Activated CD4-positive, alpha-beta T cell treated with anti-CD3 and anti-CD28 coated beads, Interleukin-2, amount 10 ng/mL, durations not matched to agents 24 days and 14 days (primary cell): ENCODE measurements at regions of chr6 and their contacts with region 1.

Region 1: GRCh38 chr6:89371849-89372505 is 19.5 kb upstream of the UBE2J1 start:
- DNase-seq: peak; percentile 95
- H3K4me3 Mint-ChIP-seq: peak overlapping the region; percentile 48
- H3K27ac Mint-ChIP-seq: peak overlapping the region; percentile 77
- H3K4me1 Mint-ChIP-seq: peaks cover 39% of the 10 kb centered on the region
- H3K27me3 Mint-ChIP-seq: no peaks in the 10 kb centered on the region

Region 2: DNA sequence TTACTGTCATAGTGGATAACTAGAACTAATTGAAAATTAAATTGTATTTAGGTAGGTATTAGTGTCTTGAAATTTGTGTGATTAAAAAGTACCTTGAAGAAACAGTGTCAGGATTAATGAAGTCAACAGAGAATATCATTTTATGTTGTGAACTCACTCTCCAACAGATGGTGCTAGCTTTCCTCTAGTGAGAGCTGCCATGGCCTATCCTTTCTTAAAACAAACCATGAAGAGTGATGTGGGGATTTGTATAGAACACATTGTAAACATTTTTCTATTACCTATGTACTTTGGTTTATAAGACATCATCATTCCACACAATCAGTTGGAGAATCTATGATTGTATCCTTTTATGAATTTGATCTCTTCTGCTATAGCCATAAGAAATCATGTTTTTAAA is 249.4 kb before region 1 on chr6:
- intact Hi-C with region 1: loop called (anchors 2 kb)
- DNase-seq: peak; percentile 67
- H3K4me3 Mint-ChIP-seq: no peak overlapping the region
- H3K27ac Mint-ChIP-seq: no peak overlapping the region
- H3K4me1 Mint-ChIP-seq: no peaks in the 10 kb centered on the region
- H3K27me3 Mint-ChIP-seq: peaks cover 23% of the 10 kb centered on the region

Region 3: GRCh38 chr6:89297695-89298351 is 74.2 kb before region 1 on chr6:
- intact Hi-C with region 1: no loop called
- DNase-seq: peak; percentile 90
- H3K4me3 Mint-ChIP-seq: peak overlapping the region; percentile 56
- H3K27ac Mint-ChIP-seq: peak overlapping the region; percentile 86
- H3K4me1 Mint-ChIP-seq: peaks cover 22% of the 10 kb centered on the region
- H3K27me3 Mint-ChIP-seq: no peaks in the 10 kb centered on the region

Region 4: GRCh38 chr6:89360415-89360999 is 11.5 kb before region 1 on chr6:
- intact Hi-C with region 1: loop called (anchors 1 kb)
- DNase-seq: no peak
- H3K4me3 Mint-ChIP-seq: peak overlapping the region; percentile 39
- H3K27ac Mint-ChIP-seq: peak overlapping the region; percentile 72
- H3K4me1 Mint-ChIP-seq: peaks cover 48% of the 10 kb centered on the region
- H3K27me3 Mint-ChIP-seq: no peaks in the 10 kb centered on the region

Region 5: GRCh38 chr6:89475634-89476033 is 103.7 kb after region 1 on chr6:
- intact Hi-C with region 1: loop called (anchors 5 kb)
- DNase-seq: peak; percentile 82
- H3K4me3 Mint-ChIP-seq: peak overlapping the region; percentile 64
- H3K27ac Mint-ChIP-seq: peak overlapping the region; percentile 73
- H3K4me1 Mint-ChIP-seq: peaks cover 16% of the 10 kb centered on the region
- H3K27me3 Mint-ChIP-seq: peaks cover 6% of the 10 kb centered on the region

Region 6: GRCh38 chr6:89638320-89639195 is 266.6 kb after region 1 on chr6 and contains the start of gene LYRM2:
- intact Hi-C with region 1: loop called (anchors 2 kb)
- DNase-seq: peak; percentile 97
- H3K4me3 Mint-ChIP-seq: peak within 1 kb of the TSS; percentile 90
- H3K27ac Mint-ChIP-seq: peak within 1 kb of the TSS; percentile 98
- H3K4me1 Mint-ChIP-seq: peaks cover 26% of the 10 kb centered on the region
- H3K27me3 Mint-ChIP-seq: no peaks in the 10 kb centered on the region
- total RNA-seq, gene LYRM2: 29.4 and 33.7 TPM in 2 replicates